Caco-2 (cell line): ENCODE measurements at regions of chr12 and their contacts with region 1.

Region 1: DNA sequence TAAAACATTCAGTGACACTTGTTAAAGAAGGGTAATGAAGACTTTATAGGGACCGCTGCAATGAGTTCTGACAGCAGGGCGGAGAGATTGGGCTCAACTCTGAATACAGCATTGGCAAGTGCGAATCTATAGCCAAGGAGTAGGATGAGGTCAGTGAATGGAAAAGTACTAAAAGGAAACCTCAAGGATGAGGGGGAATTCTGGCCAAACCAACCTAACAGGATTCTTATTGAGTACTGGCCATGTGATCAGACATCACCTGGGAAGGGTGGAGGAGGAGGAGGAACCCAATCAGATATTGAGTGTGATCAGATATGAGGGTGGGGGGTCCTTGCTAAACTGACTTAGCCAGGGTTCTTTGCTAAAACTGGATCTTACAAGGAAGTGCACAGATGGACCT is 31.0 kb downstream of the DRAM1 start:
- DNase-seq: peak; percentile 56 to 72
- H3K4me3 ChIP-seq: no peak overlapping the region
- H3K4me3 Mint-ChIP-seq: peak overlapping the region; percentile 53
- H3K27ac Mint-ChIP-seq: peak overlapping the region; percentile 93
- H3K4me1 ChIP-seq: peaks cover 23% of the 10 kb centered on the region
- H3K4me1 Mint-ChIP-seq: peaks cover 14% of the 10 kb centered on the region
- H3K27me3 ChIP-seq: no peaks in the 10 kb centered on the region
- H3K27me3 Mint-ChIP-seq: no peaks in the 10 kb centered on the region
- CTCF ChIP-seq: no peak

Region 2: GRCh38 chr12:101653503-101653902 is 254.9 kb before region 1 on chr12:
- CTCF ChIA-PET with region 1: no interaction called
- POLR2A ChIA-PET with region 1: interaction called, 10 read pairs
- intact Hi-C with region 1: no loop called
- DNase-seq: no peak
- H3K4me3 ChIP-seq: no peak overlapping the region
- H3K4me3 Mint-ChIP-seq: no peak overlapping the region
- H3K27ac Mint-ChIP-seq: no peak overlapping the region
- H3K4me1 ChIP-seq: no peaks in the 10 kb centered on the region
- H3K4me1 Mint-ChIP-seq: peaks cover 13% of the 10 kb centered on the region
- H3K27me3 ChIP-seq: no peaks in the 10 kb centered on the region
- H3K27me3 Mint-ChIP-seq: no peaks in the 10 kb centered on the region
- CTCF ChIP-seq: no peak

Region 3: DNA sequence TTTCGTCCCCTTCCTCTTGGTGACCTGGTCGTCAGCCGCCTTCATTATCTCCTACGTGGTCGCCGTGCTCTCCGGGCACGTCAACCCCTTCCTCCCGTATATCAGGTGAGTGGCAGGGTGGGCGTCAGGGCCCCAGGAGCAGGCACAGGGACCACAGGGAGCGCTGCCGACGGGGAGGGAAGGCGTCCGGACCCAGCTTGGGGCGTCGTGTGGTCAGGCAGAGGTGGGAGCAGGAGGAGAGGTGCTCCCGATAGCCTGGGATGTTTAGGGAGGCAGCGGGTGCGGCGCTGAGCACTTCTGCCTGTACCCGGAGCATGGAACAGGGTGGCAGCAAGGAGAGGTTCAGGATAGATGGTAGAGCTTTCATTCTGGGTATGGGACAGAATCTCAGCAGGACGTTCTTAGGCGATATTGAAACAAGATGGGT is 30.6 kb before region 1 on chr12:
- CTCF ChIA-PET with region 1: no interaction called
- POLR2A ChIA-PET with region 1: interaction called, 3 read pairs
- intact Hi-C with region 1: loop called (anchors 1 kb)
- DNase-seq: peak in 1 of 2 experiments; percentile 42
- H3K4me3 ChIP-seq: peak overlapping the region; percentile 95
- H3K4me3 Mint-ChIP-seq: peak overlapping the region; percentile 96
- H3K27ac Mint-ChIP-seq: peak overlapping the region; percentile 84
- H3K4me1 ChIP-seq: no peaks in the 10 kb centered on the region
- H3K4me1 Mint-ChIP-seq: peaks cover 6% of the 10 kb centered on the region
- H3K27me3 ChIP-seq: no peaks in the 10 kb centered on the region
- H3K27me3 Mint-ChIP-seq: no peaks in the 10 kb centered on the region
- CTCF ChIP-seq: no peak

Region 4: GRCh38 chr12:102682366-102683289 is 774.2 kb after region 1 on chr12:
- CTCF ChIA-PET with region 1: no interaction called
- POLR2A ChIA-PET with region 1: no interaction called
- intact Hi-C with region 1: no loop called
- DNase-seq: no peak
- H3K4me3 ChIP-seq: no peak overlapping the region
- H3K4me3 Mint-ChIP-seq: no peak overlapping the region
- H3K27ac Mint-ChIP-seq: no peak overlapping the region
- H3K4me1 ChIP-seq: 0 out of 2 replicates have a peak, but pooled peaks cover 4% of the 10 kb centered on the region
- H3K4me1 Mint-ChIP-seq: no peaks in the 10 kb centered on the region
- H3K27me3 ChIP-seq: no peaks in the 10 kb centered on the region
- H3K27me3 Mint-ChIP-seq: peaks cover 8% of the 10 kb centered on the region
- CTCF ChIP-seq: no peak